Activated CD8-positive, alpha-beta T cell treated with anti-CD3 and anti-CD28 coated beads for 36 hours (primary cell): ENCODE measurements at regions of chr19 and their contacts with region 1.

Region 1: DNA sequence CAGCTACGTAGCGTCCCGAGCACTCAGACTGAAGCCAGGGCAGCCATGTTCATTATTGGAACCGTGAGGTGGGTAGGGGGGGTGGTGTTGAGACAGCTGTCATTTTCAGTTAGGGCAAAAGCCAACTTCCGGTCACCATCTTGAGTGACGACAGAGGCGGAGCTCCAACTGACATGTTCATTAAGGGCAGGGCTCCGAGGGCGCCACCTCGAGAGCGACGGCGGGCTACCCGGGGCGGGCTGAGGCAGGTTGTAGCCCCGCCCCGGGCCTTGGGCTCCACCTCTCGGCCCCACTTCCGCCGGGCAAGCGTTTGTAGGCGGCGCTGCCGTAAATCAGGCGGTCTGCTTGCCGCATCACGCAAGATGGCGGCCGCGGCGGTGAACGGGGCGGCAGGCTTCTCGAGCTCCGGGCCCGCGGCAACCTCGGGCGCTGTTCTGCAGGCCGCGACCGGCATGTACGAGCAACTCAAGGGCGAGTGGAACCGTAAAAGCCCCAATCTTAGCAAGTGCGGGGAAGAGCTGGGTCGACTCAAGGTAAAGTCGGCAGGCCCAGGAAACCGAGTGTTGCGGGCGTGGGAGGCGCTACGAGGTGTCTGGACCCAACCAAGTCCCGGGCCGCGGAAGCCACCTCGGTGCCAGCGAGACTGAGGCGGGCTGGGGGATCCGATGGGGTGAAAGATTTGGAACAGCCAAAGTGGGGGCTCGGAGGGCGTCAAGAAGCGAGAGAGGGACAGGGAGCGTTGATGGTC is at the start of gene PSMD8:
- DNase-seq: peak; percentile 100
- ATAC-seq: peak; percentile 99
- H3K4me3 Mint-ChIP-seq: peak within 1 kb of the TSS; percentile 100
- H3K27ac Mint-ChIP-seq: peak within 1 kb of the TSS; percentile 99
- H3K4me1 Mint-ChIP-seq: peaks cover 23% of the 10 kb centered on the region
- H3K27me3 Mint-ChIP-seq: peaks cover 1% of the 10 kb centered on the region
- CTCF ChIP-seq: no peak
- total RNA-seq, gene PSMD8: 178 to 191 TPM

Region 2: DNA sequence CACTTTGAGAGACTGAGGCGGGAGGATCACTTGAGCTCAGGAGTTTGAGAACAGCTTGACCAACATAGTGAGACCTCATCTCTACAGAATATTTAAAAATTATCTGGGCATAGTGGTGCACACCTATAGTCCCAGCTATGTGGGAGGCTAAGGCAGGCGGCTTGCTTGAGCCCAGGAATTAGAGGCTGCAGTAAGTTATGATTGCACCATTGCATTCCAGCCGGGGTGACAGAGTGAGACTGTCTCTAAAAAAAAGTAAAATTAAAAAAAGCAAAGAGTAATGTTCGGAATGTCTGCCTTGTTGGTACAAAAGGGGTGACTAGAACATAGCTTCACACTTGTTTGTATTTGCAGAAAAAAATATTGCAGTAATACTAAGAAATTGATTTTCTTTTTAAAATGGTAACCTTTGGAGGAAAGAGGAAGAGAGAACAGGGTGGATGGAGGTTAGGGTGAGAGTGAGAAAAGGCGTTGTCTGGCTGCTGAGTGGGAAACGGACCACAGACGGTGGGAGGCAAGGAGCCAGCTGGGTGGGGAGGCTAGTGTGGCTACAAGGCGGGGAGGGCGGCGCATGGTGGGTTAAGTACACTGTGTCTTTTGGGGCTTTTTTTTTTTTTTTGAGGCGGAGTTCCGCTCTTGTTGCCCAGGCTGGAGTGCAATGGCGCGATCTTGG is 128.6 kb before region 1 on chr19:
- CTCF ChIA-PET with region 1: interaction called, 13 read pairs
- POLR2A ChIA-PET with region 1: no interaction called
- intact Hi-C with region 1: no loop called
- DNase-seq: no peak
- ATAC-seq: no peak
- H3K4me3 Mint-ChIP-seq: no peak overlapping the region
- H3K27ac Mint-ChIP-seq: no peak overlapping the region
- H3K4me1 Mint-ChIP-seq: peaks cover 5% of the 10 kb centered on the region
- H3K27me3 Mint-ChIP-seq: no peaks in the 10 kb centered on the region
- CTCF ChIP-seq: no peak

Region 3: DNA sequence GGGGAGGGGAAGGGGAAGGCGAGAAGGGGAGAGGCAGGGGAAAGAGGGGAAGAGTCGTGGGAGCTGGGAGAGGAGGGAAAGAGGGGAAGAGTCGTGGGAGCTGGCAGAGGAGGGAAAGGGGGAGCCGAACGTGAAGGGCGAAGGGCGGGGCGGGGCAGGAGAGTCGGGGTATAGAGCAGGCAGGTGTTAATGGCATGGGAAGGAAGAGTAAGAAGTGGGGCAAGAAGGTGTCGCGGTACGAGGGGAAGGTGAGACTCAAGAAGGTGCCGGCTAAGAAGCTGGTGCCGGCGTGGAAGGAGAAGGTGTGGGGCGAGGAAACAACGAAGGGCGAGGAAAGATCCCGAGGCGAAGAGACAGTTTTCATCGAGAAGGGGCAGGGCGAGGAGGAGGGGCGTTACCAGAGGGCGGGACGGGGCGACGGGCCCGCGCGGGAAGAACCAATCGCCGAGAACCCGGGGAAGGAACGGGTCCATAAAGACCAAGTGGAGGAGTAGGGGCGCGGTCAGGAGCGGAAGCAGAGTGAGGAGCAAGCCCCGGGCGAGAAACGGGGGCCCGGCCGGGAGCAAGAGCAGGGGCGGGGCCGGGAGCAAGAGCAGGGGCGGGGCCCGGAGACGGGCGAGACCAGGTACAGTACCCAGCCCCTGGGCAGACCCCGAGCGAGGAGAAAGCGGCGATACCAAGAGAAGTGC is 38.5 kb before region 1 on chr19:
- CTCF ChIA-PET with region 1: interaction called, 17 read pairs
- POLR2A ChIA-PET with region 1: interaction called, 13 read pairs
- intact Hi-C with region 1: loop called (anchors 5 kb)
- DNase-seq: peak; percentile 97
- ATAC-seq: peak; percentile 71
- H3K4me3 Mint-ChIP-seq: peak overlapping the region; percentile 87
- H3K27ac Mint-ChIP-seq: peak overlapping the region; percentile 97
- H3K4me1 Mint-ChIP-seq: peaks cover 12% of the 10 kb centered on the region
- H3K27me3 Mint-ChIP-seq: no peaks in the 10 kb centered on the region
- CTCF ChIP-seq: no peak

Region 4: DNA sequence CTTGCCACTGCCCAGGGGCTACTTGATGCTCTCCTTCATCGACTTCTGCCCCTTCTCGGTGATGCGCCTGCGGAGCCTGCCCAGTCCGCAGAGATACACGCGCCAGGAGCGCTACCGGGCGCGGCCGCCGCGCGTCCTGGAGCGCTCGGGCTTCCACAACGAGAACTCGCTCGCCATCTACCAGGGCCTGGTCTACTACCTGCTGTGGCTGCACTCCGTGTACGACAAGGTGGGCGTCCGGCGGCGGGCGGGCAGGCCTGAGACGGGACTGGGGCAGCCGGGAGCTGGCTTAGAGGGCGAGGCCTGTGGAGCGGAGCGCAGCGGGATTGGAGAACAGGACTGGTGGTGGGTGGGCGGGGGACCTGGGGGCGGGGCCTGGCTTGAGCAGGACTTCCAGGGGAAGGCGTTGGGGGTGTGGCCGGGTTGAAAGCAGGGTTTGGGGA is 12.9 kb before region 1 on chr19:
- CTCF ChIA-PET with region 1: interaction called, 7 read pairs
- POLR2A ChIA-PET with region 1: interaction called, 13 read pairs
- intact Hi-C with region 1: no loop called
- DNase-seq: peak; percentile 76
- ATAC-seq: peak; percentile 78
- H3K4me3 Mint-ChIP-seq: peak overlapping the region; percentile 78
- H3K27ac Mint-ChIP-seq: no peak overlapping the region
- H3K4me1 Mint-ChIP-seq: peaks cover 10% of the 10 kb centered on the region
- H3K27me3 Mint-ChIP-seq: peaks cover 25% of the 10 kb centered on the region
- CTCF ChIP-seq: peak; percentile 26

Region 5: DNA sequence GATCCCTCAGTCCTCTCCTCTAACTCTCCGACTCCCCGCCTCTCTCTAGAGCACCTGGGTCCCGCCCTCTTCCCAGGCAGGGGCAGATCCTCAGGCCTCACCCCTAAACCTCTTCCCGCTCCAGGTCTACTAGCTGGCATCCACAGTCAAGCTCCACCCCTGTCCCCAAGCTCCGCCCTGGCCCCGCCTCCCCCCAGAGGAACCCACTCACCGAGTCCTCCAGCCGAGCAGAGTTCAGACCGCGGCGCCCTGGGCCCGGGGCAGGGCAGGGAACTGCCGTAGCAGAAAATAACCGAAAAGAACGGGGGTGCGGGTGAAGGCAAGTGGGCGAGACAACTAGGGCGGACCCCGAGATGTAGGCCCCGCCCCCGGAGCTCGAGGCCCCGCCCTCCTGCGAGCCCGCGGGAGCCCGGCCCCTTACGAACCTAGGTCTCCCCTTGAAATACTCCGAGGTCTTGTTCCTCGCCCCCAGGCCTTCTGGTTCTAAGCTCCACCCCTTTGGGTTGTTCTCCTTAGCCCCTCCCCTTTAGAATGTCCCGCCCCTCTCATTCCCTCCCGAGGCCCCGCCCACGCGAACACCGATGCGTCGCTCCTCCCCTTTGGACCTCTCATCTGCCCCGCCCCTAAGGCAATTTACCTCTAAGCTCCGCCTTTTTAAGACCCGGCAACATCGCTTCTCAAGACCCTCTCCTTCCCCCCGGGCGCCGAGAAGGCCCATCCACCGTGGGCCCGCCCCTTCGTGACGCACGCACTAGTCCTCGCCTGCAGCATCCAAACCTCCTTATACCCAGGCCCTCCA is 13.1 kb after region 1 on chr19 and contains the start of gene GGN:
- CTCF ChIA-PET with region 1: interaction called, 8 read pairs
- POLR2A ChIA-PET with region 1: interaction called, 40 read pairs
- intact Hi-C with region 1: no loop called
- DNase-seq: peak; percentile 91
- ATAC-seq: peak; percentile 83
- H3K4me3 Mint-ChIP-seq: peak within 1 kb of the TSS; percentile 68
- H3K27ac Mint-ChIP-seq: no peak within 1 kb of the TSS
- H3K4me1 Mint-ChIP-seq: peaks cover 20% of the 10 kb centered on the region
- H3K27me3 Mint-ChIP-seq: peaks cover 25% of the 10 kb centered on the region
- CTCF ChIP-seq: no peak
- total RNA-seq, gene GGN: not detected